ENCODE measurements at regions of chr3 and their contacts with region 1.

Region 1: DNA sequence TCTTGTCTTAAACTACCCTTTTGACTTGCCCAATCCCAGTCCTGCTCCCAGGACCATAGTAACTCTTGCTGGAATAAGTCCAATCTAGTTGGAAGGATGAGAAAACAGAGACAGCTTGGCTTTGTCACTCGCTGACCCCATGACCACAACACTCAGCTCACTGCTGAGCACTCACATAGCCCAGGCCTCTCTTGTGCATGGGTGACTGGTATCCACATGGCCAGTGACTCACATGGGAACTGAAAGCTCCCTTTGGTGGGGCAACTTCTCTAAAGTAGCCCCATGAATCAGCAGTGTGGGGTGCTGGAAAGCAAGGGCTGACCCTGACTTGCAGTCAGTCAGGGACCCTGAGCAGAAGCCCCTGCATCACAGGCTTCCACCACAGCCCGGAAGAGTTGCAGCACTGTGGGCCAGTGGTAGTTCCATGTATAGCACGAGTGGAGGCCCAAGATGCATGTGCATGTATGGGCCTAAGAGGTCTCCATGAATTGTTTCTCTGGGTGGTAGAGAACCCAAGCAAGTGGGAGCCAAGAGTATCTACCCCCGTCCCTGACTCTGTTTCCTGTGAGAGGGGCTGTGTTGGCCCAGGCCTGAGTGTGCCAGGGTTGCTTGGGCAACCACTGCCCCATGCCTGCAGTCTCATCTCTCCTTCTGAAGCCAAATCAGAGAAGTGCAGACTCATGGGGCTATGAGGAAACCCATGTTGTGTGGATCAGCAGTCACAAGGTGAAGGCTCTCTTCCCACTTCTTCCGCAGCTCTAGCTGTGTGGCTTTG is 62.1 kb upstream of the XCR1 start:
- DNase-seq: no peak
- H3K4me3 ChIP-seq: no peak overlapping the region
- H3K27ac ChIP-seq: no peak overlapping the region
- H3K4me1 ChIP-seq: peaks cover 6% of the 10 kb centered on the region
- H3K27me3 ChIP-seq: no peaks in the 10 kb centered on the region
- CTCF ChIP-seq: no peak
- EP300 ChIP-seq: no peak
- POLR2A ChIP-seq: no peak

Region 2: DNA sequence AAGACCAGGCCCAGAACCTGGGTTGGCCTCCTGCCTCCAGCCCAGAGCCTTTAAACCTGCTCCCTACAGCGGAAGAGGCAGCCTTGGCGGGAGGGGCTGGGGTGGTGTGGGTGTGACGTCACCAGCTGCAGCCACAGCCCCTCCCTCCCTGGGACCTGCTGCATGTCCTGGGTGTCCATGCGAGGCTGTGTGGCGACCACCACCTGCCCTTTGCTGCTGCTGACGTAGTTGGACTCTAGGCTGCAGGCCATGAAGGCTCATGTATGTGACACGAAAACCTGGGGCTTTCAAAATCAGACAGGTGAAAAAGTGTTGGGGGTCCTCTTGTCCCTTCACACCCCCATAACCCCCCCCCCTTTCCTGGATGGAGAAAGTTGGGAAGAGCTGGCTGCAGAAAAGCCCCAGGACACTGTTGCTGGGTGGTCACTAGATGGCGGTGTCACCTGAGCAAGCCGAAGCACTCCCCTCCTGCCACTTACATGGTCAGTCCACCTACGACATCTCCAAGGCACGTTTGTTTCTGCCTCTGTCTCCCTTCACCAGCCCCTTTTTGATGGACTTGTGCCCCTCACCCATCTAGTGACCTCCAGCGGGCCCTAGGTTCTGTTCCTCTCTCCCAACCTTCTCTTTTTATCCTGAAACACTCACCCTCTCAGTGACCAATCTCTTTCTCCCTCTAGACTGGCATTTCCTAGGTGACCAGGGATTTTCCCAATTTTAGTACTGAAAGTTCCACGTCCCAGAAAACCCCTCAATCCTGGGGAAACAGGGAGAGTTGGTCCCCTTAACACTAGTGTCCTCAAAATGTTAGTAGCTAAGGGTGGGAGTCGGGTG is 328.3 kb before region 1 on chr3:
- intact Hi-C with region 1: no loop called
- DNase-seq: peak in 3 of 5 donors; percentile 37 to 43 (median 41)
- H3K4me3 ChIP-seq: no peak overlapping the region
- H3K27ac ChIP-seq: no peak overlapping the region
- H3K4me1 ChIP-seq: no peaks in the 10 kb centered on the region
- H3K27me3 ChIP-seq: no peaks in the 10 kb centered on the region
- CTCF ChIP-seq: no peak
- EP300 ChIP-seq: no peak
- POLR2A ChIP-seq: no peak

Region 3: DNA sequence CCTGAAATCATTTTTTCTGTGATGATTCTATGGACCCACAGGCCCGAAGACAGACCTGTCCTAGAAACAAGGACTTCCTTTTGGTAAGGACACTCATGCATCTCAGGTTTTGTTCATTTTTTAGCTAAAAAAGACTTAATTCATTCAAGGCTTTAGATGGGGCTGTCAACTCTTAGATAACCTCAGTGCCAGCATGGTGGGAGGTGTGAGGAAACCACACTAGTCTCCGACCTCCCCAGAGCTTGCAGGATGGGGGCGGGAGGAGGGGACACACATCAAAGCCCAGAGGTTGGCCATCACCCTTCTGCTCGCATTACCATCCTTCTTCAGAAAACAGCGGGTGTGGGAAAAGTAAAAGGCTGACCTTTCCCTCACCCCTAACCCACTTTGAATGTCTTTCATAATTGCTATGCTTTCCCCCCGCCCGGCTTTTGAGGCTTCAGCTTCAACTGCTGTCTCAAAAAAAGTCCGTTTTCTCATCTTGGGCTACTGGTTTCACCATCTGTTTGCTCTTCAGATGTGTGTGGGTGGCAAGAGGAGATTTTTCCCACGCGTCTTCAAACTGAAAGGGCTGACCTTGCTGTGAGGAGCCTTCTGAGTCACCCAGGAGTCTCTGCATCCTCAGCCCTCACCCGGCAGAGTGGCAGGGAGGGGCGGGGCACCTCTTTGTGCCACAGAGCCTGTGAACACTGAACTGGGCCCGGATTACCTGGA is 173.7 kb before region 1 on chr3:
- intact Hi-C with region 1: no loop called
- DNase-seq: no peak
- H3K4me3 ChIP-seq: no peak overlapping the region
- H3K27ac ChIP-seq: no peak overlapping the region
- H3K4me1 ChIP-seq: no peaks in the 10 kb centered on the region
- H3K27me3 ChIP-seq: no peaks in the 10 kb centered on the region
- CTCF ChIP-seq: no peak
- EP300 ChIP-seq: no peak
- POLR2A ChIP-seq: no peak

Region 4: DNA sequence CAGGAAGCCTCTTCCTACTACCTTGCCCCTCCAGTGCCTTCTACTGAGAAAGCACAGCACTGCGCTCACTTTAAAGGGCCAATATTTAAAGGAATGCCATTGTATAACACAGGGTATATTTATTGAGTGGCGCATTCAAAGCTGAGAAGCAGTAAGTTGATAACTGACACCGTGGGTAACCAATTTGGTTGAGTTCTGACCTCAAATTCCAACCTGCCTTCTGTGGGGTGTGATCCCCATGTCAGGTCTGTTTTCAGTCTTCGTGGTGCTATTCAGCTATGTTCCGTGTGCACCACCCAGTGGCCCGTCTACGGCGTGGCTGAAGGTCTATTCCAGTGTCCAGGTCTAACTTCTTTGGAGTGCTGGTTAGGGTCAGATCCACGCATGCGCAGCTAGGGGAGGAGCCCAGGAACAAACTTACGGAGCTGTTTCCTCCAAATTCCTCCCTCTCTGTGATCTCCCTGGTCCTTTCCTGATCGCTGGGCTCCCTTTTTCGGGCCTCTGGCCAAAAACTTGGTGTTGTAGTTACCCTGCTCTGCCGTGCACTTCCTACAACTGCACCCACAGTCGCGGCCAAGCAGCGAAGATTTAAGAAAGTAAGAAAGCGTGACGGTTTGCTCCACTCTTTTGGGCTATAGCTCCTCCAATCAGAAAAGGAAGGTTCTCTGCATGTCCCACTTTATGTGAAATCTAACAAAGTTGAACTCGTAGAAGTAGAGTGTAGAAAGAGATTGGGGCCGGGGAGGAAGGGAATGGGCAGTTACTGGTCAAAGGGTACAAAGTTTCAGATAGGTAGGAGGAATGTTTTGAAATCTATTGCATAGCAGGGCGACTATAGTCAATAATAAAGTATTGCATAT is 469.0 kb after region 1 on chr3:
- intact Hi-C with region 1: loop called in 1 of 4 experiments (anchors 5 kb)
- DNase-seq: peak; percentile 81 to 87 (median 84)
- H3K4me3 ChIP-seq: peak overlapping the region; percentile 21
- H3K27ac ChIP-seq: peak overlapping the region in 1 of 2 donors; percentile 4
- H3K4me1 ChIP-seq: no peaks in the 10 kb centered on the region
- H3K27me3 ChIP-seq: no peaks in the 10 kb centered on the region
- CTCF ChIP-seq: peak in 1 of 3 donors; percentile 35
- EP300 ChIP-seq: no peak
- POLR2A ChIP-seq: no peak